ENCODE measurements at regions of chr10 and their contacts with region 1.

Region 1: DNA sequence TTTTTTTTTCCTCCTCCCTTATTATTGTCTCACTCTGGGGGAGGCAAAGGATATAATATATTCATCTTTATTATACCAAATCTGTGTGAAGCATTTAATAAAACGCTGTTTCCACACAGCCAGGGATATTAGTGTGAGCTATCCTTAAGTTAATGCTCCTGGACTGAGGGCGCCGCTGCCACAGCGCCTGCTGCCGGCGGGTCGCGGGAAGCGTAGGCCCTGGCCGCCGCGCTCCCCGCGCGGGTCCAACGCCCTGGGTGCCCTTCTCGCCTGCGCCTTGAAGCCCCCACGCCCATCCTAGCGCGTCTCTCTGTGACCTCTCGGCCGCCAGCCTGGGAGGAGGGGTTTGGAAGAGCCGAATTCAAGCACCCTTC is 9.5 kb upstream of the LBX1 start:
- ATAC-seq: peak in 5 of 8 experiments; percentile 8 to 56 (median 43)
- H3K4me3 ChIP-seq: no peak overlapping the region
- H3K27ac ChIP-seq: no peak overlapping the region
- H3K4me1 ChIP-seq: peaks cover 2 to 8% of the 10 kb centered on the region in 2 donors

Region 2: DNA sequence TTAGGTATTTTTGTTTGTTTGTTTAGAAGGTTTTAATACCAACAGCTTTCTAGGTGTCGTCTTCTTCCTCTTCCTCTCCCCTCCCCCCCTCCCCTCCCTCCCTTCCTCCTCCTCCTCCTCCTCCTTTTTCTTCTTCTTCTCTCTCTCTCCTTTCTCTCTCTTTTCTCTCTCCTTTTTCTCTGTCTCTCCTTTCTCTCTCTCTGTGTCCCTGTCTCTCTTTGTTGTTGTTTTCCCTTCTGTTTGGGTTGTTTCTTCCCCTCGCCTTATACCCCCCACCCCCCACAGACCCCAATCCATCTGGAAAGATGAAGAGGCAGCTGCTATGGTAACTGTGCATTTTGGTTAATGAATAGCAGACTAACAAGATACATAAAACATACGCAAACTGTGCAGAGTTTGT is 190.7 kb after region 1 on chr10:
- in situ Hi-C with region 1: no loop called
- ATAC-seq: no peak
- H3K4me3 ChIP-seq: no peak overlapping the region
- H3K27ac ChIP-seq: no peak overlapping the region
- H3K4me1 ChIP-seq: no peaks in the 10 kb centered on the region

Region 3: GRCh38 chr10:101467286-101467770 is 228.6 kb after region 1 on chr10:
- in situ Hi-C with region 1: loop called in 1 of 9 experiments (anchors 25 kb)
- ATAC-seq: peak; percentile 56 to 86 (median 76)
- H3K4me3 ChIP-seq: no peak overlapping the region
- H3K27ac ChIP-seq: no peak overlapping the region
- H3K4me1 ChIP-seq: peaks cover 24 to 46% of the 10 kb centered on the region in 2 donors

Region 4: GRCh38 chr10:102040305-102041050 is 801.8 kb after region 1 on chr10:
- in situ Hi-C with region 1: no loop called
- ATAC-seq: peak in 4 of 8 experiments; percentile 51 to 72 (median 56)
- H3K4me3 ChIP-seq: no peak overlapping the region
- H3K27ac ChIP-seq: no peak overlapping the region
- H3K4me1 ChIP-seq: peaks cover 7 to 19% of the 10 kb centered on the region in 2 donors

Measured in motor neuron (in vitro differentiated cells).